ENCODE measurements at regions of chr2 and their contacts with region 1.

Region 1: DNA sequence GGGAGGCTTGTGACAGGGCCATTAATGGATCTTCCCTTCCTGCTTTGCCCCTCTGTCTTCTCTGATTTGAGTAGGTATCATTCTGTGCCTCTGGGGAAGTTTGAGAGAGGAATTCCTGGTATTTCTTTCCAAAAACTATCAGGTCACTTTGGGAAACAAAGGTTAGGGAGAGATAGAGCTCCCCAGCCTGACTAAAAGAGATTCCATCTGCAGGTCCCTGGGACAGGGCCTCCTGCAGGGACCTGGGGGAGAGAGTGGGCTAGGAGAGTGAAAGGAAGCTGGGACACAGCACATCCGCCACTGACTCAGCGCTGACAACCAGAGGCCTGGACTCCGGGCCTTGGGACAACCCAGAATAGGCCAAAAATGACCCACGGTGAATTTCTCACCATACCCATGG is 6.4 kb downstream of the GALNT14 start:
- DNase-seq: no peak
- H3K4me3 Mint-ChIP-seq: peak overlapping the region; percentile 61
- H3K27ac Mint-ChIP-seq: peak overlapping the region; percentile 72
- H3K4me1 Mint-ChIP-seq: peaks cover 93% of the 10 kb centered on the region
- H3K27me3 Mint-ChIP-seq: no peaks in the 10 kb centered on the region
- CTCF ChIP-seq: no peak

Region 2: DNA sequence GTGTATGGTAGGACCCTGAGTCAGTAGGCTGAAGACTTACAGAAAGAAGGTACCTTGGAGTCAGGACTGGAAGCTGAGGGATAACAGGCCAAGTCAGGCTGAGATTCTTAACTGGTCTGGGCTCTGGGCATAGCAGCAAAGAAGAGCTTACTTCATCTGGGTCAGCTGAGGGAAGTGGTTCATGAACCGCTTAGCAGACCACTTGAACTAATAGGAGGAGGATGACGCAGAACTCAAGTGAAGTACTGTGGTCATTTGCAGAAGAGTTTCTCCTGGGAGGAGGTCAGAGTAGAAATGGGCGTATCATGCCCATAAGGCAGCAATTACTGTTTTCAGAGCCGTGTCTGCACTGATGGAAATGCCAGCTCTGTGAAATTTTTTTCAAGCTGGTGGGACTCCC is 520.3 kb before region 1 on chr2:
- CTCF ChIA-PET with region 1: no interaction called
- intact Hi-C with region 1: no loop called
- DNase-seq: no peak
- H3K4me3 Mint-ChIP-seq: no peak overlapping the region
- H3K27ac Mint-ChIP-seq: no peak overlapping the region
- H3K4me1 Mint-ChIP-seq: peaks cover 25% of the 10 kb centered on the region
- H3K27me3 Mint-ChIP-seq: no peaks in the 10 kb centered on the region
- CTCF ChIP-seq: no peak

Region 3: DNA sequence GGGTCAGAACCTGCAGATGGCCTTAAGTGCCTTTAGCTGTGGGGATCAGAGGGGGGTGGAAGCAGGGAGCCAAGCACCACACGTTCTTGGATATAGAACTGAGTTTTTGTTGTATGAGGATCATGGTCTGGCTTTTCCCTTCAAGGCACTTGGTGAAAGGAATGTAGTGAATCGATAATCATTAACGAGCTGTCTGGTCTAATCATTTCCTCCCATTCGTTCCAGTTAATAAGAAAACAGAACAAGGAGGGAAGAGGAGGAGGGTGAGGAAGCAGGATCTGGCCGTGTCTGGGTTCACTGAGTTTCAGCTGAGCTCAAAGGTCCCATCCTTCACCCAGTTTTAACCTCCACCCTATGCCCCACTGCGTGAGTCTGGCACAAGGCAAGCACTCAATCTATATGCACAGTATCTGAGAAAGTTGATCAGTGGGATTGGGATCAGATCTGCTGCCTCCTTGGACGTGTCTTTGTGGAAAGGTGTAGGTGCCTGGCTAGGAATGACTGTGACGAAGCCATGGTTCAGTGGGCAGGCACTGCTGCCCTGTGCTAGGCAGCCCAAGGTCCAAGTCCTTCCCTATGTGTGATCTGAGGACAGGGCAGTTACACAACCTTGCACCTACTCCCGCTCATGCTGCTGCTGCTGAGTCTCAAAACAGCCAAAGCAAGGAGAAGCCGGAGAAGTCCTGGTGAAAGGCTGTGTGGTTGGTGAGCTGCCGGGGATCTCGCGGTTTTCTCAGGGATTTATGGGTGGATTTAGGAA is 48.5 kb before region 1 on chr2:
- CTCF ChIA-PET with region 1: no interaction called
- intact Hi-C with region 1: loop called (anchors 2 kb)
- DNase-seq: peak; percentile 27
- H3K4me3 Mint-ChIP-seq: peak overlapping the region; percentile 35
- H3K27ac Mint-ChIP-seq: peak overlapping the region; percentile 77
- H3K4me1 Mint-ChIP-seq: peaks cover 52% of the 10 kb centered on the region
- H3K27me3 Mint-ChIP-seq: no peaks in the 10 kb centered on the region
- CTCF ChIP-seq: no peak